Caco-2 (cell line): ENCODE measurements at regions of chr16 and their contacts with region 1.

Region 1: GRCh38 chr16:58755989-58756649 is 22.0 kb upstream of the GOT2 start:
- DNase-seq: peak; percentile 81 to 83
- H3K4me3 ChIP-seq: no peak overlapping the region
- H3K4me3 Mint-ChIP-seq: no peak overlapping the region
- H3K27ac Mint-ChIP-seq: no peak overlapping the region
- H3K4me1 ChIP-seq: no peaks in the 10 kb centered on the region
- H3K4me1 Mint-ChIP-seq: no peaks in the 10 kb centered on the region
- H3K27me3 ChIP-seq: no peaks in the 10 kb centered on the region
- H3K27me3 Mint-ChIP-seq: peaks cover 10% of the 10 kb centered on the region
- CTCF ChIP-seq: peak; percentile 85 to 94

Region 2: DNA sequence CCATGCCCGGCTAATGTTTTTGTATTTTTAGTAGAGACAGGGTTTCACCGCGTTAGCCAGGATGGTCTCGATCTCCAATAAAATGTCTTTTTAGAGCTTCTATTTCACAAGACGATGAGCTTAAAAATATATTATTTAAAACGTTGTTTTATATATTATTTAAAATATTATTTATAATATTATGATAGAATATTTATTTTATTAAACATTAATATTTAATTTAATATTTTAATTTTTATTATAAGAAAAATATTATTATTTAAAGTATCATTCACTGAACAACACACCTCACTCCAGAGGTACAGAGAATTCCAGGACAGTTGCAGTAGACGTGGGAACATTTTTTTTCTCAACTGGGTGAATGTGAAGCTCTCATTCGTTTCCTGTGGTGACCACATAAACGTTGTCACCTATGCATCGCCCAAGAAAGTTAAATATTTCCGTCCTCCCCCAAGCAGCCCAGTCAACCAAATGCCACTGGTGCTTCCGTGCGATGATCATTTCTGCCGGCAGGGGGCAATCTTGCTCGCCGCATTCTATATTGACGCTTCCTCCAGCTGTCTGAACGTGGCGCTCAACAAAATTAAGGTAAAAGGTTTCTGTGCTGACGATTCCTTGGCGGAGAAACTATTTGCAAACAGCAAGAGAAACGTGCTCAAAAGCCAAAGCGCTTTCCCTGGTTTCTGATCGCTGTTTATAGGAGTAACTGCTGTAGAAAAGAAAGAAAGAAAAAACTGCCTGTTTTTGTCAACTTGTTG is 419.6 kb before region 1 on chr16:
- CTCF ChIA-PET with region 1: interaction called, 11 read pairs
- POLR2A ChIA-PET with region 1: no interaction called
- intact Hi-C with region 1: loop called (anchors 1 kb)
- DNase-seq: peak; percentile 89 to 92
- H3K4me3 ChIP-seq: no peak overlapping the region
- H3K4me3 Mint-ChIP-seq: peak overlapping the region; percentile 48
- H3K27ac Mint-ChIP-seq: no peak overlapping the region
- H3K4me1 ChIP-seq: no peaks in the 10 kb centered on the region
- H3K4me1 Mint-ChIP-seq: no peaks in the 10 kb centered on the region
- H3K27me3 ChIP-seq: no peaks in the 10 kb centered on the region
- H3K27me3 Mint-ChIP-seq: no peaks in the 10 kb centered on the region
- CTCF ChIP-seq: peak; percentile 93 to 95

Region 3: DNA sequence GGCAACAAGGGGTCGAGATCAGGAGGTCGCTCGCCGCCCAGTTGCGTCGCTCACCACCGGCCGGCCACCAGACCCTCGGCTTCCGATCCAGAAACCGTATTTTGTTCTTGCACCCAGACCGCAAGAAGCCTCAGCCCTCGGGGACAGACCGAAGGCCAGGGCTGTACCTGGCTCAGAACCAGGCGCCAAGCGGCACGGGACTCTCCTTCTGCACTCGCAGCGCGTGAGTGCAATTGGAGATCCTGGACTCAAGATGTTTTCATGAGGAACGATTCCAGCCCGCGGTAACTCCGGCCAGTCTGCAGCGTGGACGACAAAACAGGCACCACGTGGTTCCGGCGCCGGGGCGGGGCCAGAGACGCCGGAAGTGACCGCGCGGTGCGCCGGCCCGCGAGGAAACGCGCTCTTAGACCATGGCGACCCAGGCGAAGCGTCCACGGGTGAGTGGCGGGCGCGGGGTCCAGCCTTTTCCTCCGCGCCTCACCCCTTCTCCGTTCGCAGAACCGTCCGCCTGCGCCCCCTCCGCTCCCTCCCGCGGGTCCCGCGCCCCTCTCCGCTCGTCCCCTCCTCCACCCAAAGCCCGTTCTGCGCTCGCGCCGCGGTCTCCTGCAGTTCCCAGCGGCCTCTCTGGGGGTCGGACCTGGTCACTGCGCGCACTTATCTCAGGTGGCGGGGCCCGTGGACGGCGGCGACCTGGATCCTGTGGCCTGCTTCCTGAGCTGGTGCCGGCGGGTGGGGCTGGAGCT is 240.8 kb before region 1 on chr16 and contains the start of gene SETD6:
- CTCF ChIA-PET with region 1: interaction called, 12 read pairs
- POLR2A ChIA-PET with region 1: no interaction called
- intact Hi-C with region 1: loop called (anchors 1 kb)
- DNase-seq: peak; percentile 91 to 95
- H3K4me3 ChIP-seq: peak within 1 kb of the TSS; percentile 88
- H3K4me3 Mint-ChIP-seq: peak within 1 kb of the TSS; percentile 93
- H3K27ac Mint-ChIP-seq: peak within 1 kb of the TSS; percentile 97
- H3K4me1 ChIP-seq: peaks cover 18% of the 10 kb centered on the region
- H3K4me1 Mint-ChIP-seq: peaks cover 43% of the 10 kb centered on the region
- H3K27me3 ChIP-seq: no peaks in the 10 kb centered on the region
- H3K27me3 Mint-ChIP-seq: no peaks in the 10 kb centered on the region
- CTCF ChIP-seq: peak; percentile 16 to 36
- total RNA-seq, gene SETD6: 34.9 and 41.7 TPM in 2 replicates

Region 4: GRCh38 chr16:58678716-58679115 is 77.4 kb before region 1 on chr16:
- CTCF ChIA-PET with region 1: interaction called, 27 read pairs
- POLR2A ChIA-PET with region 1: no interaction called
- intact Hi-C with region 1: loop called (anchors 1 kb)
- DNase-seq: no peak
- H3K4me3 ChIP-seq: no peak overlapping the region
- H3K4me3 Mint-ChIP-seq: no peak overlapping the region
- H3K27ac Mint-ChIP-seq: no peak overlapping the region
- H3K4me1 ChIP-seq: peaks cover 2% of the 10 kb centered on the region
- H3K4me1 Mint-ChIP-seq: peaks cover 3% of the 10 kb centered on the region
- H3K27me3 ChIP-seq: no peaks in the 10 kb centered on the region
- H3K27me3 Mint-ChIP-seq: no peaks in the 10 kb centered on the region
- CTCF ChIP-seq: peak in 1 of 2 experiments; percentile 33

Region 5: DNA sequence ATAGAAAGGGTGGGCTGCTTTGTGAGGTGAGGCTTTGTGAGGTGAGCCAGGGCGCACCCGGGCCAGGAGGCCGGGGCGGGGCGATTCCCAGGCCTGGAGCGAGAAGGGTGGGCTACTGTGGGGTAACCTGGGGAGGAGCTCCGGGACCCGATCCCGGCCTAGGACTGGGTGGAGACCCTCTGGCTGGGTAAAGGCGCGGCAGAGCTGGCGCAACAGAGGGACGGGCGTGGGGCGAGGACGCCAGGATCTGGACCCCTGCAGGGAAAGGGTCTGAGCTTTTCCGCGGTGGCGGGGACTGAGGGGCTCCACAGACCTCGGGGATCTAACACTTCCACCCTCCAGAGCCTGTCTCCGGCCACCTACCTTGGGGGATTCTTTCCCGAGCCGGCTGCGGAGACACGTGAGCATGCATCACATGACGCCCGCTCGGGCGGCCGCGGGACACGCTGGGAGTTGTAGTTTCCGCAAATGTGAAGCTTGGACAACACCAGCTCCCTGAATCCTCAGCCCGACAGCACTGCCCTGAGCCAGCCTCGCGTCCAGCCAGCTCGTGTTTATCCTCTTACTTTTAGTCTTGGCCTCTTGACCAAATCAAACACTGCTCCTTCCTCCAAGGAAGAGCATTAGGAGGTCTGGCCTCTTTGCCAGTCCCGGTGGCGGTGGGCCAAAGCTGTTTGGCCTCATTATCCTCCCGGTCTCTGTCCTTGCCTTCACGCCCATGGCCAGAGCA is 71.6 kb before region 1 on chr16 and contains the start of gene SLC38A7:
- CTCF ChIA-PET with region 1: interaction called, 27 read pairs
- POLR2A ChIA-PET with region 1: no interaction called
- intact Hi-C with region 1: no loop called
- DNase-seq: peak; percentile 89
- H3K4me3 ChIP-seq: peak within 1 kb of the TSS; percentile 89
- H3K4me3 Mint-ChIP-seq: peak within 1 kb of the TSS; percentile 81
- H3K27ac Mint-ChIP-seq: peak within 1 kb of the TSS; percentile 84
- H3K4me1 ChIP-seq: peaks cover 9% of the 10 kb centered on the region
- H3K4me1 Mint-ChIP-seq: peaks cover 7% of the 10 kb centered on the region
- H3K27me3 ChIP-seq: no peaks in the 10 kb centered on the region
- H3K27me3 Mint-ChIP-seq: peaks cover 1% of the 10 kb centered on the region
- CTCF ChIP-seq: no peak
- total RNA-seq, gene SLC38A7: 24.1 and 27.6 TPM in 2 replicates

Region 6: GRCh38 chr16:58716468-58716867 is 39.7 kb before region 1 on chr16:
- CTCF ChIA-PET with region 1: no interaction called
- POLR2A ChIA-PET with region 1: no interaction called
- intact Hi-C with region 1: loop called (anchors 2 kb)
- DNase-seq: no peak
- H3K4me3 ChIP-seq: no peak overlapping the region
- H3K4me3 Mint-ChIP-seq: no peak overlapping the region
- H3K27ac Mint-ChIP-seq: no peak overlapping the region
- H3K4me1 ChIP-seq: peaks cover 8% of the 10 kb centered on the region; the same call in 1 of the 2 replicates
- H3K4me1 Mint-ChIP-seq: peaks cover 4% of the 10 kb centered on the region
- H3K27me3 ChIP-seq: no peaks in the 10 kb centered on the region
- H3K27me3 Mint-ChIP-seq: no peaks in the 10 kb centered on the region
- CTCF ChIP-seq: no peak

Region 7: DNA sequence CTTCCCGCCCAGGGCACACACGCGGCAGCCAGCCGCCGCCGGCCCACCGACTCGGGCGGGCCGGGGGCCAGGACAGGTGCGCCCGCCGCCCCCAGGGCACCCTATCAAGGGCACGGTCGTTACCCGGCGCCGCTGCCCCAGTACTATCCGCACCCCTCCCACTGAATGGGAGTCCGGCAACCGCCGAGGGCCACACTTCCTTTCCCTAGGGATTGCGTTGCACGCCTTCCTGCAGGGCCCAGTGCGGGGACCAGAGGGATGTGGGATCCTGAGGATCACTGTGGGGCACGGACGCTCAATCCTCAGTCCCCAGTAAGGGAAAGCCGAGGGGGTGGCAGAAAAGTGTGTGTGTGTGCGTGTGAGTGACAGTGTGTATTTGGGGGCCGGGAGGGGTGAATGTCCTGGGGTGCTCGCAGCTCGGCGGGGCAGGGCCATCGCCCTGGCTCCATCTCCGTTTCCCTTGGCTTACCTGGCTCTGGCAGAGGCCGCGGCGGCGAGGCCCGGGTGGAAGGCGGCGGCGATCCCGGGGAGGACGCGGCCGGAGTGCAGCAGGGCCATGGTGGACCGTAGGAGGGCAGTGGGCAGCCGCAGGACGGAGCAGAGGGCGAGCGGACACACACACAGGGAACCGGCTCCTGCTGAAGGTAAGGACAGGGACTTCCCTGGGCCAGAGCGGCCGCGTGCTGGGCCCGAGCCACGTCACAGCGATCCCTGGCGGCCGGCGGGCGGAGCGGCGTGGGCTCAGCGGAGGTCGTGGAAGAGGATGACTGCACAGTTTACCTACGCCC is 22.3 kb before region 1 on chr16 and contains the start of gene GOT2:
- CTCF ChIA-PET with region 1: interaction called, 8 read pairs
- POLR2A ChIA-PET with region 1: no interaction called
- intact Hi-C with region 1: loop called (anchors 1 kb)
- DNase-seq: peak; percentile 89 to 94
- H3K4me3 ChIP-seq: peak within 1 kb of the TSS; percentile 76
- H3K4me3 Mint-ChIP-seq: peak within 1 kb of the TSS; percentile 100
- H3K27ac Mint-ChIP-seq: peak within 1 kb of the TSS; percentile 99
- H3K4me1 ChIP-seq: no peaks in the 10 kb centered on the region; the same call in 1 of the 2 replicates
- H3K4me1 Mint-ChIP-seq: peaks cover 12% of the 10 kb centered on the region
- H3K27me3 ChIP-seq: no peaks in the 10 kb centered on the region
- H3K27me3 Mint-ChIP-seq: no peaks in the 10 kb centered on the region
- CTCF ChIP-seq: peak; percentile 75 to 98
- total RNA-seq, gene GOT2: 150 and 153 TPM in 2 replicates